Mammary epithelial cell (primary cell): ENCODE measurements at regions of chr10 and their contacts with region 1.

Region 1: GRCh38 chr10:70391654-70392053 is 9.2 kb upstream of the LRRC20 start:
- DNase-seq: no peak
- H3K4me3 ChIP-seq: no peak overlapping the region
- H3K27ac ChIP-seq: no peak overlapping the region
- H3K4me1 ChIP-seq: peaks cover 6% of the 10 kb centered on the region
- H3K27me3 ChIP-seq: no peaks in the 10 kb centered on the region
- CTCF ChIP-seq: no peak

Region 2: GRCh38 chr10:70233109-70233938 is 158.3 kb before region 1 on chr10 and contains the start of gene PPA1:
- CTCF ChIA-PET with region 1: no interaction called
- dilution Hi-C with region 1: no loop called
- in situ Hi-C with region 1: no loop called
- intact Hi-C with region 1: loop called (anchors 1 kb)
- DNase-seq: peak; percentile 95
- H3K4me3 ChIP-seq: peak within 1 kb of the TSS; percentile 64 to 94 (median 77)
- H3K27ac ChIP-seq: peak within 1 kb of the TSS; percentile 84
- H3K4me1 ChIP-seq: peaks cover 14% of the 10 kb centered on the region
- H3K27me3 ChIP-seq: no peaks in the 10 kb centered on the region
- CTCF ChIP-seq: peak; percentile 21 to 31
- total RNA-seq, gene PPA1: 170 to 218 TPM

Region 3: DNA sequence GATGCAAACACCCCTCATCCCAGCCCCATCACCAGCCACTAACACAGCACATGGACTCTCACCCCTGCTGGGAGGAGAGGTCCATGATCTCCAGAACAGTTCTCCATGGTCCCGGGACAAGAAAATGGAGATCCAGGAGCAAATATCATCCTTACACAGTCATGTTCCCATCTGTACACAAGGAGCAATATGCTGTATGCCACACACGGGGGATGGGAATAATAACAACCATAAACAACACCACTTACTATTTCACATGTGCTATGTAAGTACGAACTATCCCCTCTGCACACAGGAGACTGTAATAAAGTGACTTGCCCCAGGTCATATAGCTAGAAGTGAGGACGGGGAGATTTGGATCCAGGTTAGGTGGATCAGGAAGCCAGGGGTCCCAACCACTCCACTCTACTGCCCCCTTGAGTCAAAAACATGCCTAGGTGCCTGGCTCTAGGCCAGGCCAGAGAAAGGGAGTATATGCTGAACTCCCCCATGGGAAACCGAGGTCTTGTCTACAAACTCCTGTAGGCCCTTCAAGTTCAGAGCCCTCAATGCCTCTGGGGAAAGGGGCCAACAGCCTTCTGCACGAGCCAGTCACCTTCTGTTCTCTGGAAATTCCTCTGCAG is 43.3 kb before region 1 on chr10:
- CTCF ChIA-PET with region 1: no interaction called
- dilution Hi-C with region 1: no loop called
- in situ Hi-C with region 1: no loop called
- intact Hi-C with region 1: loop called (anchors 1 kb)
- DNase-seq: peak; percentile 32
- H3K4me3 ChIP-seq: no peak overlapping the region
- H3K27ac ChIP-seq: no peak overlapping the region
- H3K4me1 ChIP-seq: no peaks in the 10 kb centered on the region
- H3K27me3 ChIP-seq: no peaks in the 10 kb centered on the region
- CTCF ChIP-seq: peak; percentile 60 to 76

Region 4: DNA sequence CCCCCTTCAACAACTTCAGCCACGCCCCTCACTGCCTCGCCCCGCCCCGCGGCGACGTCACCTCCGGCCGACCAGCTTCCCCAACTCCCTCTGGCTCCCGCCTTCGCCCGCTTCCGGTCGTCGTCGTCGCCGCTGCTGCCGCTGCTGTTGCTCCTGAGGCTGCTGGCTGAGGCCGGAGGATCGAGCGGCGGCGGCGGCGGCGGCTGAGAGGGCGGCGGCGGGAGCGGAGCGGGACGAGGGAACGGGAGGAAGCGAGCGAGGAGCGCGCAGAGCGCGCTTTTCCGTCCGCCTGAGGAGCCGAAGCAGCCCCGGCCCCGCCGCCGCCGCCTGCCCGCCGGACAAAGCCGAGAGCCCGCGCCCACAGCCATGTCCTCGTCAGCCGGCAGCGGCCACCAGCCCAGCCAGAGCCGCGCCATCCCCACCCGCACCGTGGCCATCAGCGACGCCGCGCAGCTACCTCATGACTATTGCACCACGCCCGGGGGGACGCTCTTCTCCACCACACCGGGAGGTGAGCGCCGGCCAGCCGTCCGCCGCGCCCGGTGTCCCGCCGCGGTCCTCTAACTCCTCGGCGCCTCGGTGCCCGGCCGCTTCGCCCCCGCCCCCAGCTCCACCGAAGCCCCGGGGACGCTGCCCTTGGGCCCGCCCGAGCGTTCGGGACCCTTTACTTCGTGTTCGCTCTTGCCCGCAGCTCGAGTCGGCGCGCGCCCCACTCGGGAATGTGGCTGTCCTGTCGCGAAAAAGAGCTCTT is 12.6 kb after region 1 on chr10 and contains the start of gene EIF4EBP2:
- CTCF ChIA-PET with region 1: interaction called, 3 read pairs
- dilution Hi-C with region 1: no loop called
- in situ Hi-C with region 1: no loop called
- intact Hi-C with region 1: loop called (anchors 1 kb)
- DNase-seq: peak; percentile 96
- H3K4me3 ChIP-seq: peak within 1 kb of the TSS; percentile 69 to 81 (median 72)
- H3K27ac ChIP-seq: peak within 1 kb of the TSS; percentile 67
- H3K4me1 ChIP-seq: peaks cover 15% of the 10 kb centered on the region
- H3K27me3 ChIP-seq: no peaks in the 10 kb centered on the region
- CTCF ChIP-seq: no peak
- total RNA-seq, gene EIF4EBP2: 34.7 to 47.5 TPM